ENCODE measurements at regions of chr17 and their contacts with region 1.

Region 1: GRCh38 chr17:76121932-76122430 is 18.4 kb upstream of the EXOC7 start:
- DNase-seq: no peak
- H3K4me3 ChIP-seq: peak overlapping the region in 1 of 2 donors; percentile 60
- H3K4me3 Mint-ChIP-seq: peak overlapping the region in 4 of 8 donors; percentile 21 to 49 (median 37)
- H3K27ac ChIP-seq: peak overlapping the region; percentile 29
- H3K27ac Mint-ChIP-seq: peak overlapping the region in 6 of 7 donors; percentile 21 to 86 (median 65)
- H3K4me1 ChIP-seq: peaks cover 10% of the 10 kb centered on the region
- H3K4me1 Mint-ChIP-seq: peaks cover 4 to 12% (median 8%) of the 10 kb centered on the region in 4 donors
- H3K27me3 ChIP-seq: no peaks in the 10 kb centered on the region
- H3K27me3 Mint-ChIP-seq: no peaks in the 10 kb centered on the region

Region 2: GRCh38 chr17:76088036-76088867 is 33.7 kb before region 1 on chr17:
- CTCF ChIA-PET with region 1: no interaction called
- POLR2A ChIA-PET with region 1: no interaction called
- intact Hi-C with region 1: no loop called
- DNase-seq: no peak
- H3K4me3 ChIP-seq: no peak overlapping the region
- H3K4me3 Mint-ChIP-seq: no peak overlapping the region
- H3K27ac ChIP-seq: no peak overlapping the region
- H3K27ac Mint-ChIP-seq: no peak overlapping the region
- H3K4me1 ChIP-seq: no peaks in the 10 kb centered on the region
- H3K4me1 Mint-ChIP-seq: peaks cover 0 to 11% (median 3%) of the 10 kb centered on the region in 4 donors
- H3K27me3 ChIP-seq: no peaks in the 10 kb centered on the region
- H3K27me3 Mint-ChIP-seq: no peaks in the 10 kb centered on the region

Region 3: DNA sequence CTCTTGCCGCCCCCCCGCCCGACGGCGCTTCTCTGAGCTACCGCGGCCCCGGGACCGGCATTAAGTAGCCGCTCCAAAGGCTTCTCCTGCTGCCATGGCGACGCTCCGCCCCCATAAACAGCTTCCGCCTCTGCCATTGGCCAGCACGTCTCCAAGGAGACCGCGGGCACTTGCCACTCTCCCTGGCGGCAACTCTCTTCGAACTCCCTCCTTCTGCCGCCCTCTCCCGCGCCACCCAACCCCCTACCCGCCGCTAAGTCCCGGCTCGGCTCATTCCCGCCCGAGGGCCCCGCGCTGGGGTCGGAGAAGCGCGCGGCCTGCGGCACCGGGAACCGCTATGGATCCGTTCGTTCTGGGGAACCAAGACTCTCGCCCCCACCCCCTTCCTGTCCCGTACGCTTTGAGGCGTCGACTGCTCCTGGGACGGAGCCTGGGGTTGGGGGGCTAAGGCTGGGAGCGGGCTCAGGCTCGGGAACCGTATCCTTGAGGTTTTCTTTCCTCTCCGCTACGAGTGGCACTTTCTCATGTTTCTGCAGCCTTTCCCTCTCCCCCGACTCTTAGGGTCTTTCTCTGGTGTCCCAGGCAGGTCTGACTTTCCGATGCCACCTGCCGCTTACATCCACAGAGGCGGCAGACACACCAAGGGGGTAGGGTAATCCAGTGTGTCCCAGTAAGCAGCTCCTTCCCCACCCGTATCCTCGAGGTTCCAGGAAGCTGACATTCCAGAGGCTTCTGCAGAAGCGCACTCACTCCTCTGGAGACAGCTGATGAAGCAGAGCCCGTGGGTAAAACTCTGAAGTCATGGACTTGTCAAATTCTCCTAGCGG is 19.4 kb after region 1 on chr17 and contains the start of gene FOXJ1:
- CTCF ChIA-PET with region 1: interaction called, 11 read pairs
- POLR2A ChIA-PET with region 1: interaction called, 11 read pairs
- intact Hi-C with region 1: no loop called
- DNase-seq: peak; percentile 90 to 93 (median 92)
- H3K4me3 ChIP-seq: peak within 1 kb of the TSS; percentile 19 to 48
- H3K4me3 Mint-ChIP-seq: peak within 1 kb of the TSS; percentile 75 to 94 (median 84)
- H3K27ac ChIP-seq: no peak within 1 kb of the TSS
- H3K27ac Mint-ChIP-seq: peak within 1 kb of the TSS; percentile 78 to 96 (median 85)
- H3K4me1 ChIP-seq: peaks cover 66% of the 10 kb centered on the region
- H3K4me1 Mint-ChIP-seq: peaks cover 39 to 63% (median 50%) of the 10 kb centered on the region in 4 donors
- H3K27me3 ChIP-seq: peaks cover 4% of the 10 kb centered on the region
- H3K27me3 Mint-ChIP-seq: peaks cover 3% of the 10 kb centered on the region in 2 donors
- total RNA-seq, gene FOXJ1: 0.19 to 0.20 TPM

Region 4: DNA sequence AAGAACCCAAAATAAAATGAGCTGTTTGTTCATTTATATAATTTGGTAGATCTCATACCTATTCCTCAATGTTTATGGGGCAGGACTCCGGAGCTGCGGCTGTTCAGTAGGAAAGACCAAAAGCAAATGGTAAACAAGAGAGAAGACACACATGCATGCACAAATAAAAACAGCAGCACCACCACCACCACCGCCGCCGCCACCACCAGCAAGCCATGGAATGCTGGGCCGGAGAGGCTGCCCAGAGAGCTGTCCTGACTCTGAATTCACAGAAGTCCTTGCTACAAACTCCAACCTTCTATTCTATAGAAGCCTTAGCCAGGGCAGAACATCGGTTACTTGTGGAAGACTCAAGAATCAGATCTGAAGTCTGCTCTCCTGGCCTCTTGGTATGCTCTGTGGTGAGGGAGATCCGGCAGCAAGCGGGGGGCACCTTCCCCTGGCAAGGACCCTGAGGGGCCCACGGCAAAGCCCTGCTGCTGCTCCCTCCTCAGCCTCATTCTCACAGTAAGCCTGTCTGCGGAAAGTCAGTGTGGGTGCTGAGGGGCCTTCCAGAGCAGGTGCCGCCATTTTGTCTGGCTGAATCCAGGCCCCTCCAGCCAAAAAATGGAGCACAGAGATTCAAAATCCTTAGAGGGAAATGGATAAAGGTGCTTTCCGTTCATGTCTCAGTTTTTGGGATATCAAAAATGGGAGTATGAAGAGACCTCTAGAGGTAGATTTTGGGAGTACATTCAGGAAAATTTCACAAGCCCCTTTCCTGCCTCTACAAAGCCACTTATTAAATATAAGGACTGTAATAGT is 25.4 kb after region 1 on chr17:
- CTCF ChIA-PET with region 1: interaction called, 11 read pairs
- POLR2A ChIA-PET with region 1: interaction called, 11 read pairs
- intact Hi-C with region 1: no loop called
- DNase-seq: no peak
- H3K4me3 ChIP-seq: no peak overlapping the region
- H3K4me3 Mint-ChIP-seq: no peak overlapping the region
- H3K27ac ChIP-seq: no peak overlapping the region
- H3K27ac Mint-ChIP-seq: peak overlapping the region; percentile 31 to 99 (median 64)
- H3K4me1 ChIP-seq: peaks cover 63% of the 10 kb centered on the region
- H3K4me1 Mint-ChIP-seq: peaks cover 43 to 77% (median 60%) of the 10 kb centered on the region in 4 donors
- H3K27me3 ChIP-seq: no peaks in the 10 kb centered on the region
- H3K27me3 Mint-ChIP-seq: no peaks in the 10 kb centered on the region

Region 5: DNA sequence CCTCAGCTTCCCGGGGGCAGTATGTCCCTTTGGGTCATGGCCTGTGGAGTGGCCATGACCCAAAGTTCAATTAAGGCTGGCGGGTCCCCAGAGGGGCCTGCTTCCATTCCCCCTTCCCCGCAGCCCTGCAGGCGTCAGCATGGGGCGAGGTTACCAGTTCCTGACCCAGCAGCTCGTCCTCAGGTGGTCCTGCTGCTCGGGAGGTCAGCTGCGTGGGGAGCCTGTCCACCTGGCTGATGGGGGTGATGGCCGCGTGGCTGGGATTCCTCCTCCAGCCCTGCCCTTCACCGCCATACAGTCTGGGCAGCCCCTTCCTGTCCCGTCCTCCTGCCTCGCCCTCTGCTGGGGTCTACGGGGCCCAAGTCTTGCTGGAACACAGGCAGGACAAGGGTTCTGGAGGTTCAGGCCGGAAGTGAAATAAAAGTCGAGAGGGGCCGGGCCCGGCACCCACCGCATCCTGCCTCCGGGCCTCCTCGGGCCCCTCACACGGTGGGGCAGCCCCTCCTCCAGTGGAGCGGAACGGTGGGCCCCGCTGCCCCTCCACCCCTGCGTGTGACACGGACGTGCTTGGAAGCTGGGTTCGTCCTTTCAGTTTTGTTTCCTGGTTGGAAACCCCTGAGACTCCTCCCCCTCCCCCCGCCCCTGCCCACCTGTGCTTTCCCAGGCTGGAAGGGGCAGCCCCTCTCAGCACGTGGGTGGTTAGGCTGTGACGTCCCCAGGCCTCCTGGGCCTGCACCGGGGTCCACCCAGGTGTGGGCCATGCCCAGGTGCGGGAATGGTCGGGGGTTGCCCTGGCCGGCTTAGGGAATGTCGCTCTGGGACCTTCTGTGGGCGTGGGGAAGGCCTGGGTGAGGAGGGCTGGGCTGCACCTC is 149.9 kb after region 1 on chr17:
- CTCF ChIA-PET with region 1: interaction called, 232 read pairs
- POLR2A ChIA-PET with region 1: interaction called, 108 read pairs
- intact Hi-C with region 1: no loop called
- DNase-seq: peak; percentile 56 to 85 (median 59)
- H3K4me3 ChIP-seq: peak overlapping the region in 1 of 2 donors; percentile 68
- H3K4me3 Mint-ChIP-seq: peak overlapping the region; percentile 78 to 90 (median 82)
- H3K27ac ChIP-seq: peak overlapping the region; percentile 89
- H3K27ac Mint-ChIP-seq: peak overlapping the region; percentile 86 to 96 (median 92)
- H3K4me1 ChIP-seq: peaks cover 79% of the 10 kb centered on the region
- H3K4me1 Mint-ChIP-seq: peaks cover 21 to 86% (median 48%) of the 10 kb centered on the region in 4 donors
- H3K27me3 ChIP-seq: no peaks in the 10 kb centered on the region
- H3K27me3 Mint-ChIP-seq: no peaks in the 10 kb centered on the region

Region 6: GRCh38 chr17:76296186-76296585 is 174.2 kb after region 1 on chr17:
- CTCF ChIA-PET with region 1: interaction called, 4 read pairs
- POLR2A ChIA-PET with region 1: no interaction called
- intact Hi-C with region 1: loop called (anchors 1 kb)
- DNase-seq: no peak
- H3K4me3 ChIP-seq: no peak overlapping the region
- H3K4me3 Mint-ChIP-seq: no peak overlapping the region
- H3K27ac ChIP-seq: no peak overlapping the region
- H3K27ac Mint-ChIP-seq: peak overlapping the region in 1 of 7 donors; percentile 46
- H3K4me1 ChIP-seq: no peaks in the 10 kb centered on the region
- H3K4me1 Mint-ChIP-seq: peaks cover 0 to 2% (median under 1%) of the 10 kb centered on the region in 4 donors
- H3K27me3 ChIP-seq: no peaks in the 10 kb centered on the region
- H3K27me3 Mint-ChIP-seq: no peaks in the 10 kb centered on the region

Region 7: DNA sequence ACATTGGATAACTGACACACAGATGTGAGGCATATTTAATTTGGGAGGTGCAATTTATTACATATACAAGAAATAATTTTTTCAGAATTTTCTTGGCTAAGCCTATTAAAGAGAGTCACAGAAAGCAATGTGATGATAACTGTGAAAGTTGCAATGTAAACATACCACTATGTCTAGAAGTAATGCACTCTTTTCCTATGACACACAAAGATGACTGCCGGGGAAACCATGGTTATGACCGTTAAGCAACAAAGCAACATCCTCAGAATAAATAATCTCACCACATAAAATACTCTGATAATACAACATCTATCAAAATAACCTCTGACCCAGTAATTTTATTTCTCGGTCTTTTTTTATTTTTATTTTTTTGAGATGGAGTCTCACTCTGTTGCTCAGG is 196.6 kb after region 1 on chr17:
- CTCF ChIA-PET with region 1: no interaction called
- POLR2A ChIA-PET with region 1: no interaction called
- intact Hi-C with region 1: no loop called
- DNase-seq: no peak
- H3K4me3 ChIP-seq: no peak overlapping the region
- H3K4me3 Mint-ChIP-seq: no peak overlapping the region
- H3K27ac ChIP-seq: no peak overlapping the region
- H3K27ac Mint-ChIP-seq: no peak overlapping the region
- H3K4me1 ChIP-seq: no peaks in the 10 kb centered on the region
- H3K4me1 Mint-ChIP-seq: peaks cover 8 to 11% (median 10%) of the 10 kb centered on the region in 4 donors
- H3K27me3 ChIP-seq: no peaks in the 10 kb centered on the region
- H3K27me3 Mint-ChIP-seq: no peaks in the 10 kb centered on the region

Measured in CD4-positive, alpha-beta memory T cell (primary cell).